Aorta (tissue), 5 donors: ENCODE measurements at regions of chr16 and their contacts with region 1.

Region 1: DNA sequence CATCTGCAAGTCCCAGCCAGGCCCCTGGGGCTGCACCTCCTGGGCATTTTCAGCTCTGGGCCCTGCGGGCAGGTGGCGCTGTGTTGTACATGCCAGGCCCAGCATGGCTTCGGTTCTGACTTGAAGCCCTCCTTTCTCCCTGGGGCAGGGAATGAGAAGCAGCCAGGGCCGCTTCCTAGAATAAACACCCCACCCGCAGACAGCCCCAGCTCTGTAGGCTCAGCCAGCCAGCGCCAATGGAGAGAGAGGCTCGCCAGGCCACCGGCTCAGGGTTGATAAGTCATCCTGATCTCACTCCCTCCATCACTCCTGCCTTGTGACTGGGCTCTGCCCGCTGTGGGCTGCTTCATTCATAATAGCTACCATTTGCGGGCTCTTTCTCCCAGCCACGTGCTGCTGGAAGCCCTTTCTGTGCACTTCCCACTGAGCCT is 6.0 kb upstream of the GLIS2 start:
- DNase-seq: peak; percentile 81 to 87
- ATAC-seq: no peak
- H3K4me3 ChIP-seq: no peak overlapping the region
- H3K27ac ChIP-seq: peak overlapping the region in 1 of 2 donors; percentile 2
- H3K4me1 ChIP-seq: no peaks in the 10 kb centered on the region
- H3K27me3 ChIP-seq: no peaks in the 10 kb centered on the region

Region 2: GRCh38 chr16:3950343-3951193 is 359.3 kb before region 1 on chr16:
- intact Hi-C with region 1: loop called in 1 of 2 experiments (anchors 10 kb)
- DNase-seq: peak; percentile 93 to 94
- ATAC-seq: peak; percentile 71
- H3K4me3 ChIP-seq: peak overlapping the region; percentile 28 to 31
- H3K27ac ChIP-seq: peak overlapping the region; percentile 91 to 99
- H3K4me1 ChIP-seq: peaks cover 0 to 2% of the 10 kb centered on the region in 2 donors
- H3K27me3 ChIP-seq: no peaks in the 10 kb centered on the region

Region 3: GRCh38 chr16:4288148-4288921 is 21.5 kb before region 1 on chr16:
- intact Hi-C with region 1: no loop called
- DNase-seq: peak; percentile 77 to 94
- ATAC-seq: peak; percentile 80
- H3K4me3 ChIP-seq: no peak overlapping the region
- H3K27ac ChIP-seq: no peak overlapping the region
- H3K4me1 ChIP-seq: no peaks in the 10 kb centered on the region
- H3K27me3 ChIP-seq: no peaks in the 10 kb centered on the region